HepG2 (cell line): ENCODE measurements at regions of chr18 and their contacts with region 1.

Region 1: DNA sequence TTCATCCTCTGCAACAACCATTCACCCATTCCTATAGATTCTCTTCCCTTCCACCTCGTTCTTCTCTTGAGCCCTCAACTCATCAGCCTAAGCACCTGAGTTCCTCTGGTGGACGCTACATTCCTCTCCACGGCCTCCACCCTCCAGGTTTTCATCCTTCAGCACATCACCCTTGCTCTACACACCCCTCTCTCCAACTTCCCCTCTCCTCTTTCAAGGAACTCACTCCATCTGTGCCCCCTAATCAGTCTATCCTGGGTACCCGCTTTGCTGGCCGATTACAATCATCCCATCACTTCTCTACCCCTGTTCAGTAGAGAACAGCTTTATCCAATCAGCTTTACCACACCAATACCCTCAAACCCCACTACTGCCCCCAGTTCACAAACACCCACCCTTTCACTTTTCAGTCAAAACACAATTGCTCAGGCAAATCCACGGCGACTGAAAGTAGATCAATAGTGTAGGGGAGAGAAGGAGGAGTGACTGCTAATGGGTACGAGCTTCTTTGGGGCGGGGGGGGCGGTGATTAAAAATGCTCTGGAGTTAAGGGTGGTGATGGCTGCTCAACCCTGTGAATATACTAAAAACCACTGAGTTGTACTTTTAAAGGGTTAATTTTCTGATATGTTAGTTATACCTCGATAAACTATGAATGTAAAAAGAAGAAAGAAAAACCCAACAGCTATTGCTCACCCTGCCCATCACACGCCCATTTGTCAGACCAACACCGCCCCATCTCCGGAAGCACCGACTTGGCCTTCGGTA is 857 bp downstream of the DYM start:
- DNase-seq: no peak
- ATAC-seq: peak; percentile 3; the same call in 1 of the 3 replicates
- H3K4me3 ChIP-seq: peak overlapping the region; percentile 88 to 90 (median 88)
- H3K27ac ChIP-seq: peak overlapping the region; percentile 80
- H3K4me1 ChIP-seq: peaks cover 55% of the 10 kb centered on the region
- H3K27me3 ChIP-seq: peaks cover 0 to 2% of the 10 kb centered on the region in 2 experiments; a peak in 1 of 5 replicates
- CTCF ChIP-seq: no peak
- EP300 ChIP-seq: no peak
- POLR2A ChIP-seq: no peak
- RAD21 ChIP-seq: no peak

Region 2: DNA sequence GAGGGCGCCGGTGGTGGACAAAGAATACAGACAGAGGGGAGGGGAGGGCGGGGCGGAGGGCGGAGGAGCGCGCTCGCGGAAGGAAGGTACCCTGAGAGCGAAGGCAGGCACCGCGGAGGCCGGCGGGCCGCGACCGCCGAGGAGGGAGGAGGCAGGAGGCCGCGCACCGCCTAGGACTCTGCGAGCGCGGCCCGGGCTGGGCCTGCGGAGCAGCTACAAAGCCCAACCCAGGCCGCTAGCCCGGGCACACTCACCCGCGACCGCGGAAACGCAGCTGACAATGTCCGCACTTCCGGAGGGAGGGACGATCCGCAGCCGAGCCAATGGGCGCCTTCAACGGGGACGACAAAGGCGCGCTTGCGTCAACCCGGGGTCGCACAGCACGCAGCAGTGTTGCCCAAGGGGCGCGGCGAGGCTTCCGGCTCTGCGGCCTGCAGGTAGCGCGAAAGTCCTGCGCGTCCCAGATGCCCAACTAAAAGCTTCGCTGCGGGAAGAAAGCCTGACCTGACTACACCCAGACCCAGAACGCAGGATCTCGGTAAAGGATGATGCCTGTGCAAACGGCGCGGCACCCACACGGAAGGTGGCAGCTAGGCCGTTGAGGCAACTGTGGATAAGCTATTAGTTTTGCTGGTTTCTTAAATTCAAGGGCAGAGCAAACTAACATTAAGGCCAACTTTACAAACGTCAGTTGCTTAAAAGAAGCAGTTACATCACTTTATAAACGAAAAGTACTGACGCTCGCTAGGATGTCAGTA is 27.5 kb after region 1 on chr18 and contains the start of gene C18orf32:
- CTCF ChIA-PET with region 1: no interaction called
- POLR2A ChIA-PET with region 1: interaction called, 22 read pairs
- in situ Hi-C with region 1: no loop called
- intact Hi-C with region 1: loop called (anchors 1 kb)
- DNase-seq: peak; percentile 87
- ATAC-seq: peak; percentile 97
- H3K4me3 ChIP-seq: peak within 1 kb of the TSS; percentile 83 to 99 (median 88)
- H3K27ac ChIP-seq: peak within 1 kb of the TSS; percentile 83
- H3K4me1 ChIP-seq: peaks cover 41% of the 10 kb centered on the region
- H3K27me3 ChIP-seq: no peaks in the 10 kb centered on the region; a peak in 1 of 5 replicates
- CTCF ChIP-seq: peak; percentile 46; the same call in 1 of the 2 replicates
- EP300 ChIP-seq: no peak
- POLR2A ChIP-seq: peak; percentile 79 to 86
- RAD21 ChIP-seq: peak; percentile 76
- total RNA-seq, gene C18orf32: 14.5 and 20.6 TPM in 2 replicates